Right ventricle myocardium inferior (tissue), 1 donor: ENCODE measurements at regions of chr5 and their contacts with region 1.

Region 1: DNA sequence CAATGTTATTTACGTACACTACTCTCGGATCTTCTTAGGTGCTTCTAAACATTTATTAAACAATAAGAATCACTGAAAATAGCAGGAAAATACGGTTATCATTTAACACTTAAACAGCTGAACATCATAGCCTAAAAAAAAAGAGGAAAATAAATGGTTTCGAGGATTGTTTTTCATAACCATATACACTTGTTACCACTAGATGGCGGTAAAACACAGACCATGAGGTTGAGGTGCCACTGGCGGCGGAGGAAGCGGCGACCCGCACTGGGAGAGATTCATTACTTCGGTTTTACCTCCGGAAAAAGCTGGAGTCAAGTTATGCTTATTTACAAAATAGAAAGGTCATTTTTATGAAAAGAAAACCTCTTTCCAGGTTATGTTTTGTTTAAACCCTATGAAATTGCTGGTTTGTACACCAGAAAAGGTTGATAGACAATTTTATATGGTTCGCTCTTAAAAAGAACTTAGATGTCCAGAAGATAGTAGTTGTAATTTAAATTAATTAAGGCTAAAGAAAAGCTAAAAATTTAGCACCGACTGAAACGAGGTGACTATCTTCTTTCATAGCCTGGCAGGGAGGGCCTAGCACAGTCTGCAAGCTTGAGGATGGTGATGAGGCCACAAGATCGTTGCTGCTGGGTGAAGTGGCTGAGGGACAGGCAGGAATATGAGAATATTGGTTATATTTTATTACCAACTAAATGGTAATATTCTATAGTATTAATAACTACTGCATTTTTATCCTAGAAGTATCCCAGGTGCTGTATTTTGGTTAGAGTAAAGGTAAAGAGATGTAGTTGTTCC is 605.7 kb downstream of the RAB3C start:
- DNase-seq: peak; percentile 90
- ATAC-seq: peak; percentile 81

Region 2: GRCh38 chr5:59133682-59134261 is 54.9 kb before region 1 on chr5:
- intact Hi-C with region 1: no loop called
- DNase-seq: no peak
- ATAC-seq: peak; percentile 27

Region 3: GRCh38 chr5:59380350-59380951 is 191.8 kb after region 1 on chr5:
- intact Hi-C with region 1: loop called (anchors 2 kb)
- DNase-seq: no peak
- ATAC-seq: peak; percentile 72